Dorsolateral prefrontal cortex (tissue), 120 donors: ENCODE measurements at regions of chr12 and their contacts with region 1.

Region 1: DNA sequence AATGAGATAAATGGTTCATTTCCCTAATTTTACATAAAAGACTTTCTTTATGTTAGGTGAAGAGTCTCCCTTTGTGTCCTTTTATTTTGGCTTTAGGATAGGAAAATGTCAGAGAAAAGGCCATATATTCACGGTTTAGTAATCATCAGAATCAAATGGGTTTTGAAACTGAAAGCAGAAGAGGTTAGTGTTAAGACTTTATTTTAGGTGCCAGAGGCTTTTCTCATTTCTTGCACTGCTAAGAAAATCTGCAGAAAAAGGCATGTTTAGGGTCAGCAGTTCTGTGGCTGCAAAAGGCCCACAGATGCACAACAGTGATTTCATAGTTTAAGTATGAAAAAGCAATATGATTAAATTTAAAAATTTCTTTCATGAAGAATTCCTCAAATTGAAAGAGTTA is 80.4 kb upstream of the SINHCAF start:
- DNase-seq: no peak
- H3K4me3 ChIP-seq: no peak overlapping the region
- H3K27ac ChIP-seq: peak overlapping the region in 1 of 59 donors; percentile 13
- H3K27me3 ChIP-seq: no peaks in the 10 kb centered on the region
- CTCF ChIP-seq: no peak

Region 2: GRCh38 chr12:30564394-30564793 is 842.0 kb before region 1 on chr12:
- intact Hi-C with region 1: no loop called
- DNase-seq: no peak
- H3K4me3 ChIP-seq: no peak overlapping the region
- H3K27ac ChIP-seq: no peak overlapping the region
- H3K27me3 ChIP-seq: peaks cover 0 to 6% (median 0%) of the 10 kb centered on the region in 45 donors
- CTCF ChIP-seq: no peak

Region 3: GRCh38 chr12:31631784-31632183 is 225.4 kb after region 1 on chr12:
- intact Hi-C with region 1: loop called in 1 of 2 experiments (anchors 1 kb)
- DNase-seq: no peak
- H3K4me3 ChIP-seq: no peak overlapping the region
- H3K27ac ChIP-seq: no peak overlapping the region
- H3K27me3 ChIP-seq: no peaks in the 10 kb centered on the region
- CTCF ChIP-seq: no peak

Region 4: GRCh38 chr12:31641509-31642090 is 235.3 kb after region 1 on chr12:
- intact Hi-C with region 1: loop called (anchors 1 kb)
- DNase-seq: peak in 1 of 10 donors; percentile 20
- H3K4me3 ChIP-seq: no peak overlapping the region
- H3K27ac ChIP-seq: no peak overlapping the region
- H3K27me3 ChIP-seq: no peaks in the 10 kb centered on the region
- CTCF ChIP-seq: no peak

Region 5: GRCh38 chr12:32312049-32312670 is 905.8 kb after region 1 on chr12:
- intact Hi-C with region 1: loop called in 1 of 2 experiments (anchors 10 kb)
- DNase-seq: no peak
- H3K4me3 ChIP-seq: no peak overlapping the region
- H3K27ac ChIP-seq: peak overlapping the region in 1 of 59 donors; percentile 22
- H3K27me3 ChIP-seq: no peaks in the 10 kb centered on the region
- CTCF ChIP-seq: peak; percentile 19 to 79 (median 61)